Activated CD4-positive, alpha-beta T cell treated with anti-CD3 and anti-CD28 coated beads, Interleukin-2, amount 10 ng/mL, durations not matched to agents 7 days and 5 days (primary cell): ENCODE measurements at regions of chr6 and their contacts with region 1.

Region 1: GRCh38 chr6:2866181-2866846 is 24.7 kb upstream of the SERPINB1 start:
- DNase-seq: no peak
- H3K4me3 Mint-ChIP-seq: no peak overlapping the region
- H3K27ac Mint-ChIP-seq: no peak overlapping the region
- H3K4me1 Mint-ChIP-seq: peaks cover 61% of the 10 kb centered on the region
- H3K27me3 Mint-ChIP-seq: no peaks in the 10 kb centered on the region

Region 2: GRCh38 chr6:2876210-2877056 is 10.1 kb after region 1 on chr6:
- CTCF ChIA-PET with region 1: interaction called, 17 read pairs
- POLR2A ChIA-PET with region 1: interaction called, 4 read pairs
- DNase-seq: no peak
- H3K4me3 Mint-ChIP-seq: peak overlapping the region; percentile 75
- H3K27ac Mint-ChIP-seq: peak overlapping the region; percentile 96
- H3K4me1 Mint-ChIP-seq: peaks cover 77% of the 10 kb centered on the region
- H3K27me3 Mint-ChIP-seq: no peaks in the 10 kb centered on the region

Region 3: DNA sequence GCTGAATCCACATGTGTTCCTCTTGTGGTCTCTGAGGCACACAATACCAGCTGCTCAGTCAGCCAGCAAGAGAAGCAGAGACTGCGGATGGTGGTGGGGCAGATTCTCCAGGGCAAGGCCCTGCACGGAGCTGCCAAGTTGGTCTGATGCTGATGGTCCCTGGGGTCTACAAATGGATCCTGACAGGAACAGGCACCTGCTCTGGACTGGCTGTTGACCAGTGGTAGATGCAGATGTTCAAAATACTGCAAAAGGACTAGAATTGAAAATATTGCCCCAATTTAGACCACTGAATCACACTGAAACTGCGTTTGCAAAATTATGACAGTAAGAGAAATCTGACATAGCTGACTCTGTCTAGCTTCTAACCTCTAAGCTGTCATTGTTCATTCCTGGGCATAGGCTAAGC is 320.7 kb after region 1 on chr6:
- CTCF ChIA-PET with region 1: no interaction called
- POLR2A ChIA-PET with region 1: no interaction called
- DNase-seq: no peak
- H3K4me3 Mint-ChIP-seq: no peak overlapping the region
- H3K27ac Mint-ChIP-seq: no peak overlapping the region
- H3K4me1 Mint-ChIP-seq: no peaks in the 10 kb centered on the region
- H3K27me3 Mint-ChIP-seq: peaks cover 22% of the 10 kb centered on the region